Uterus (tissue), 4 donors: ENCODE measurements at regions of chr1 and their contacts with region 1.

Region 1: DNA sequence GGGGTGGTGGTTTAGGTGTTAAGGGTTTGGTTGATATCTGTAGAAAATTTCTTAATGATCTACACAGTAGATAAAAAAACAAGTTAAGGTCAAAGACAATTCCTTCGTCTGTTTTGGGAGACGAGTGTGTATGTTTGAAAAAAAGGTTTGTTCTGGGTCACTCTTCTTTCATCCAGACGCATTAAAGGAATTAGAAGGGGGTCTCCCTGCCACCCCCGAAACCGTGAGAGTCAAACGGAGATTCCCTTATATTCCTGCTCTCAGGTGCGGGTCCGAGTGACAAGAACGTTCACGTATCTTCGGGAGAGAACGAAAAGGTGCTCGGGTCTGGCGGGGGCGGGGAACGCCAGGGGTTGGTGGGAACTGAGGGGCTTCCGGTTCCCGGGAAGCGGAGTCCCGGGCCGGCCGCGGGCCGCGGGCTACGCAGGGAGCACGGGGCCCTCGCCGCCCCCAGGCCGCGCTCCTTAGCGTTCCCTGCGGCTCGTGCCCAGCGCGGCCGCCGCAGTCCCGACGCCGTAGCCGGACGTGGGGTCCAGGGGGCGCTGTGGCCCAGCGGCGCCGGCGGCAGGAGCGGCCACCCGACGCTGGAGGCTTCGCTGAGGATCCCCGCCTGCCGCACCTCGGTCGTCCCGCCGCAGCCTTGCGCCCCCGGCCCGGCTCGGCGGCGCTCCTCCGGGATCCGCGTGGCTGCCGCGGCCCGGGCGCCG is at the start of gene ZFYVE9:
- DNase-seq: peak; percentile 63 to 79
- H3K4me3 ChIP-seq: peak within 1 kb of the TSS; percentile 68 to 82
- H3K27ac ChIP-seq: peak within 1 kb of the TSS; percentile 99 to 100
- H3K4me1 ChIP-seq: no peaks in the 10 kb centered on the region
- H3K27me3 ChIP-seq: no peaks in the 10 kb centered on the region
- CTCF ChIP-seq: peak; percentile 16 to 96 (median 91)
- POLR2A ChIP-seq: peak; percentile 41 to 54
- total RNA-seq, gene ZFYVE9: 25.6 to 95.0 (median 48.3) TPM

Region 2: DNA sequence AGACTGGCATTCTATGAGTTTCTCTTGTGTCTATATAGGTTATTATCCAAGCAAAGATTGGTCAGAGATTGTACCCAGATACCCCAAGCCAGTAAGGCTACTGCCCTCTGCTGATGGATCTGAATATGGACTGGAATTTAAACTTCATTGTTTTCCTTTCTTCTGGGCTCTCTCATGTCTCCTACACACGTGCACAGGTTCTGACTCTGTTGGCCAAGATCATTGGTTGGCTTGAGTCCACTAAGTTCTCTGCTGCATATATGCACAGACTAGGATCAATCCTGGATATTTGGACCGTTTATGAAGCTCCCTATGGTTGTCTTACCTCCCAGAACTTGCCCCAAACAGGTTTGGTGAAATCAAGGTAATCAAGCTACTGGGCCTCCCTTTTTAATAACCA is 154.7 kb after region 1 on chr1:
- intact Hi-C with region 1: loop called (anchors 10 kb)
- DNase-seq: no peak
- H3K4me3 ChIP-seq: no peak overlapping the region
- H3K27ac ChIP-seq: no peak overlapping the region
- H3K4me1 ChIP-seq: no peaks in the 10 kb centered on the region
- H3K27me3 ChIP-seq: no peaks in the 10 kb centered on the region
- CTCF ChIP-seq: peak; percentile 57 to 67 (median 61)
- POLR2A ChIP-seq: no peak